Panc1 (cell line): ENCODE measurements at regions of chr19 and their contacts with region 1.

Region 1: DNA sequence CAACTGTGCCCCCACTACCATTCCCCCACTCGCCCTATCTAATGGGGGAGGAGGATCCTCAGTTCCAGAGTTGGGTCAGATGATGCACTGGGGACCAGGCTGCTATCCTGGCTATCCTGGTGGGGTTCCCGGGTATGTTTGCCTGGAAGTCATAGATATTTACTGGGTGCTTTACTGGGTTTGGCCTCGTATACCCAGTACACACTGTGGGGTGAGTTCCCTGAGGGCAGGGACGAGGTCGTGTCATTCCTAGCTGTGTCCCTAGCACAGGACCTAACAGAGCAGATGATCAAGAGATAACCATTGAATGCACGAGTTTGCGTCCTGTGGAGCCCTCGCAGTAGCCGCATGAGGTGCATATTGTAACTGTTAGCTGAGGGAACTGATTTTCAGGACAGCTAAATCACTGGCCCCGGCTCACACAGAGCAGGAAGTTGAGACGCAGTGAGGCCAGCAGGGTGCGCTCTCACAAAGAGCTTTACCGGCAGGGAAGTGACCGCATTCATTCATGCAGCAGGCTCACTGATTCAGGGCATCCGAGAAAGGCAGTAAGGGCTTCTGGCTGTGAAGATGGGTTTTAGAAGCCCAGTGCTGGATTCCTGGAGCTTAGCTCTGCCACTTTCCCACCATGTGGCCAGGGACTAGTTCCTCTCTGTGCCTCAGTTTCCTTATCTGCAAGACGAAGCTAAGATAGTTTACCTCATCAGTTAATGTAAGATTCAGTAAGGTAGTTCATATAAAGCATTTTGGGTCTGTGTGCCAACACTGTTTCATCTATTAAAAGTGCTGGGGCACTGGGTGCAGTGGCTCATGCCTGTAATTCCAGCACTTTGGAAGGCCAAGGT is 6.0 kb downstream of the RUVBL2 start:
- DNase-seq: no peak
- ATAC-seq: peak; percentile 89
- H3K4me3 ChIP-seq: no peak overlapping the region
- H3K27ac ChIP-seq: no peak overlapping the region
- H3K4me1 ChIP-seq: no peaks in the 10 kb centered on the region
- H3K27me3 ChIP-seq: no peaks in the 10 kb centered on the region
- CTCF ChIP-seq: peak; percentile 82

Region 2: DNA sequence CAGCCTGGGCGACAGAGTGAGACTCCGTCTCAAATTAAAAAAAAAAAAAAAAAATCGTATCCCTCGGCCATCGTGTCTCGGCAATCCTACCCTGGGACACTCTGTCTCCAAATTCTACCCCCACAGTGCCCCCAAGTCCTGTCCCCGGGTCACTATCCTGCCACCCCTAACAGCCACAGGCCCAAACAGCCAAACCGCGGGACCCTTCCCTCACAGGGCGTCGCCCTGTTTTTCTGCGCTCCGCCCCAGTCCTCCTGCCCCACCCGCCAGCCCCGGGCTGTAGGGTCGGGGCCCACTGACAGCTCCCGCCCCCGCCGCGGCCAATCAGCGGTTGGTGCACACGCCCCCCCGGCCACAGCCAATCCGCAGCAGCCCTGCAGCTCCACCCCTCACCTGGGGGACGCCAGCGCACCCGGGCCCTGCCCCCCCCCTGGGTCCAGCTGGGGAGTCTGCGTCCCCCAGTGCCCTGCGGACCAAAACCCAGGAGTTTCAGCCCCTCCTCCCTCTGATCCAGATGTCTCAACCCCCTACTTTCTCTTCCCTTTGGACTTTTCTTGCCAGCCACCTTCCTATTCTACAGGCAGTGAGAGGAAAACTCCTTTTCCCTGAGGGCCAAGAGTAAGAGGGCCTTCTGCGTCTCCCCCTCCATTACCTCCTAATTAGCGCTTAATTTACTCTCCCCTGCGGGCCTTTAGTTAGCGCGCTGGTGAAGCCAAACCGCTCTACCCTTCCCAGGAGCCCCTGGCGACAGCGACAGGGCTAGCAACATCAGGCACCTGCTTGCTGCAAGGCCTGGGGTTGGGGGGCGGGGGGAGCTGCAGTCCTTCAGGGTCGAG is 187.4 kb before region 1 on chr19:
- CTCF ChIA-PET with region 1: no interaction called
- POLR2A ChIA-PET with region 1: no interaction called
- in situ Hi-C with region 1: no loop called
- intact Hi-C with region 1: no loop called
- DNase-seq: no peak
- ATAC-seq: peak; percentile 86
- H3K4me3 ChIP-seq: peak overlapping the region; percentile 63 to 64
- H3K27ac ChIP-seq: no peak overlapping the region
- H3K4me1 ChIP-seq: no peaks in the 10 kb centered on the region; the same call in none of the 2 replicates
- H3K27me3 ChIP-seq: no peaks in the 10 kb centered on the region
- CTCF ChIP-seq: no peak

Region 3: GRCh38 chr19:48826606-48827020 is 173.1 kb before region 1 on chr19:
- CTCF ChIA-PET with region 1: interaction called, 10 read pairs
- POLR2A ChIA-PET with region 1: no interaction called
- in situ Hi-C with region 1: no loop called
- intact Hi-C with region 1: no loop called
- DNase-seq: no peak
- ATAC-seq: no peak
- H3K4me3 ChIP-seq: no peak overlapping the region
- H3K27ac ChIP-seq: no peak overlapping the region
- H3K4me1 ChIP-seq: no peaks in the 10 kb centered on the region
- H3K27me3 ChIP-seq: no peaks in the 10 kb centered on the region
- CTCF ChIP-seq: no peak

Region 4: GRCh38 chr19:49118565-49119410 is 119.1 kb after region 1 on chr19 and contains the start of gene C19orf73:
- CTCF ChIA-PET with region 1: no interaction called
- POLR2A ChIA-PET with region 1: no interaction called
- in situ Hi-C with region 1: no loop called
- intact Hi-C with region 1: no loop called
- DNase-seq: peak; percentile 50
- ATAC-seq: peak; percentile 85
- H3K4me3 ChIP-seq: peak within 1 kb of the TSS; percentile 53 to 57
- H3K27ac ChIP-seq: peak within 1 kb of the TSS; percentile 83
- H3K4me1 ChIP-seq: peaks cover 7% of the 10 kb centered on the region
- H3K27me3 ChIP-seq: no peaks in the 10 kb centered on the region
- CTCF ChIP-seq: no peak
- total RNA-seq, gene C19orf73: 1.4 TPM

Region 5: GRCh38 chr19:49403404-49404187 is 403.9 kb after region 1 on chr19:
- CTCF ChIA-PET with region 1: no interaction called
- POLR2A ChIA-PET with region 1: no interaction called
- in situ Hi-C with region 1: no loop called
- intact Hi-C with region 1: no loop called
- DNase-seq: no peak
- ATAC-seq: no peak
- H3K4me3 ChIP-seq: no peak overlapping the region
- H3K27ac ChIP-seq: no peak overlapping the region
- H3K4me1 ChIP-seq: no peaks in the 10 kb centered on the region
- H3K27me3 ChIP-seq: no peaks in the 10 kb centered on the region
- CTCF ChIP-seq: no peak

Region 6: DNA sequence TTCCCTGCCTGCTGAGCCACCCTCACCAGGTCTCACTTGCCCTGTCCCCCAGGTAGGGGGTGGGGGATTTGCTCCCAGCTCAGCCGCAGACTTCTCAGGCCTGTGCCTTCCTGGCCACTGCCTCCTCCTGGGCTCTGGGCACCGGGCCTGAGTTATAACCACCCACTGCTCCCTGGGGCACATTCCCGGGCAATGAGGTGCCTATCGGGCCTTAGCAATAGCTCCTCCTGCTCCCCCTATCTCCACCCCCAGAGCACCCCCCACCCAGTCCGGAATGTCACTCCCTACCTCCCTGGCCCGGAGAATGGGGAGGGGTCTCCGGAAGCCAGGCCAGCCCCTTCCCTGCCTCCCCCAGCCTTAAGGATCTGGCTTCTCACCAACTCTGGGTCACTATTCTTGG is 1953.2 kb after region 1 on chr19 and contains the start of gene KLK5:
- CTCF ChIA-PET with region 1: no interaction called
- POLR2A ChIA-PET with region 1: no interaction called
- in situ Hi-C with region 1: no loop called
- intact Hi-C with region 1: no loop called
- DNase-seq: no peak
- ATAC-seq: no peak
- H3K4me3 ChIP-seq: no peak within 1 kb of the TSS
- H3K27ac ChIP-seq: no peak within 1 kb of the TSS
- H3K4me1 ChIP-seq: no peaks in the 10 kb centered on the region
- H3K27me3 ChIP-seq: no peaks in the 10 kb centered on the region; the same call in 1 of the 2 replicates
- CTCF ChIP-seq: no peak
- total RNA-seq, gene KLK5: not detected